Activated naive CD4-positive, alpha-beta T cell treated with anti-CD3 and anti-CD28 coated beads for 36 hours (primary cell): ENCODE measurements at regions of chr1 and their contacts with region 1.

Region 1: DNA sequence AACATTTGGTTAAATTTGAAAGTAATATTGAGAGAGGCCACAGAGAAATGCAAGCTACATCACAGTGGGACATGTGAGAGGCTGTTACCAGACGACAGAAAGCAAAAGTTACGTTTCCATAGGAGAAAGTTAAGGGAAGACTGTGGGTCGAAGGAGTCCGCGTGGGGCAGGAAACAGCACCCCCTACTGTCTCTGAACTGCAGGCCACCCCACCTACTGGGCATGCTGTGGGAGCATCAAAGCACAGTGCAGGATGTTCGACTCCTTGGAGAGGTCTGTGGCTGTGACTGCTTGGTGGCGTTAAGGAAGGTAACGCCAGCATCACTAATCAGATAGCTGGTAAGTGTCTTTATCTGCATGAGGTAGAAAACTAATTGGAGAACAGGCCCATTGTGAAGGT is 123.9 kb downstream of the PTBP2 start:
- DNase-seq: peak; percentile 52
- H3K4me3 Mint-ChIP-seq: no peak overlapping the region
- H3K27ac Mint-ChIP-seq: no peak overlapping the region
- H3K4me1 Mint-ChIP-seq: no peaks in the 10 kb centered on the region
- H3K27me3 Mint-ChIP-seq: peaks cover 2% of the 10 kb centered on the region

Region 2: GRCh38 chr1:96538111-96538641 is 307.3 kb before region 1 on chr1:
- CTCF ChIA-PET with region 1: interaction called, 3 read pairs
- intact Hi-C with region 1: loop called (anchors 10 kb)
- DNase-seq: no peak
- H3K4me3 Mint-ChIP-seq: no peak overlapping the region
- H3K27ac Mint-ChIP-seq: no peak overlapping the region
- H3K4me1 Mint-ChIP-seq: no peaks in the 10 kb centered on the region
- H3K27me3 Mint-ChIP-seq: peaks cover 2% of the 10 kb centered on the region

Region 3: GRCh38 chr1:96596226-96596922 is 249.1 kb before region 1 on chr1:
- CTCF ChIA-PET with region 1: no interaction called
- intact Hi-C with region 1: loop called (anchors 10 kb)
- DNase-seq: peak; percentile 39
- H3K4me3 Mint-ChIP-seq: no peak overlapping the region
- H3K27ac Mint-ChIP-seq: no peak overlapping the region
- H3K4me1 Mint-ChIP-seq: no peaks in the 10 kb centered on the region
- H3K27me3 Mint-ChIP-seq: no peaks in the 10 kb centered on the region